Naive thymus-derived CD4-positive, alpha-beta T cell (primary cell): ENCODE measurements at regions of chr4 and their contacts with region 1.

Region 1: DNA sequence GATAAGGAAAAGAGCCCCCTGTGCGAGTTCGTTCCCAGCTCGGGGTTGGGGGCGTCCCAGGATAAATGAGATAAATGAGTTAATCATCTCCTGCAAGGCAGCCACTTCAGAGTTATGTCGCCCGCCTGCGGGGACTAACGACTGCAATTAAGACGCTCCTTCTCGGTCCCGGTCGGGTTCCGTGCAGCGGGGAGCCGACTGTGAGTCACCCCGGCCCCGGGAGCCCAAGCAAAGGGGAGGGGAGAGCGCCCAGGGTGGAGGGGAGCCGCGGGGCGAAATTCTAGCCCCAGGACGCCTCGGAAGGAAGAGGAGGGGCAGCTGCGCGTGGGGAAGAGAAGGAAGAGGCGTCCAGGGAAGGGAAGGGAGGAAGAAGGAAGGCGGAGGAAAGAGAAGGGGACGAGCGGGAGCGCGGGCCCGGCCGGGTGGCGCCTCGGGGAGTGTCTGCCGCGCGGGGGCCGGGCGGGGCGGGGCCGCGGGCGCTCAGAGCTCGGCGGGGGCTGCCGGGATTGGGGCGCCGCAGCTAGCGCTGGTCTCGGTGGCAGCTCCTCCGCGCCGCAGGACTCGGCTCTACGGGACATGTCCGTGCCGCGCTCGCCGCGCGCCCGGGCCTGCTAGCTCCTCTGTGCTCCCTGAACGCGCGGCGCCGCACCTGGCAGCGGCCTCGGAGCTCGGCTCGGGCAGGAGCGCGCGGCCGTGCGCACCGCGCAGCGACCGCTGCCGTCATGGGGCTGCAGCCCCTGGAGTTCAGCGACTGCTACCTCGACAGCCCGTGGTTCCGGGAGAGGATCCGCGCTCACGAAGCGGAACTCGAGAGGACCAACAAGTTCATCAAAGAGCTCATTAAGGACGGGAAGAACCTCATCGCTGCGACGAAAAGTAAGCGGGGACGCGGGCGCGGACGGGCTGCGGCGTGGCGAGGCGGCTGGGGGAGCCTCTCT is at the start of gene ARHGAP10:
- DNase-seq: peak; percentile 34 to 74 (median 54)
- ATAC-seq: peak; percentile 79
- H3K4me3 ChIP-seq: peak within 1 kb of the TSS; percentile 76
- H3K4me3 Mint-ChIP-seq: peak within 1 kb of the TSS; percentile 89 to 97 (median 92)
- H3K27ac ChIP-seq: peak within 1 kb of the TSS; percentile 63
- H3K27ac Mint-ChIP-seq: peak within 1 kb of the TSS; percentile 75 to 93 (median 88)
- H3K4me1 ChIP-seq: peaks cover 14 to 15% of the 10 kb centered on the region in 2 donors
- H3K4me1 Mint-ChIP-seq: peaks cover 13 to 42% (median 24%) of the 10 kb centered on the region in 7 donors
- H3K27me3 ChIP-seq: no peaks in the 10 kb centered on the region
- H3K27me3 Mint-ChIP-seq: peaks cover 0 to 41% (median 0%) of the 10 kb centered on the region in 5 donors
- total RNA-seq, gene ARHGAP10: 2.9 to 8.5 (median 3.2) TPM

Region 2: GRCh38 chr4:147683717-147684700 is 47.8 kb before region 1 on chr4 and contains the start of gene PRMT9:
- CTCF ChIA-PET with region 1: no interaction called
- POLR2A ChIA-PET with region 1: interaction called, 10 read pairs
- intact Hi-C with region 1: loop called (anchors 1 kb)
- DNase-seq: peak; percentile 79 to 90 (median 85)
- ATAC-seq: peak; percentile 98
- H3K4me3 ChIP-seq: peak within 1 kb of the TSS; percentile 97
- H3K4me3 Mint-ChIP-seq: peak within 1 kb of the TSS; percentile 89 to 100 (median 97)
- H3K27ac ChIP-seq: peak within 1 kb of the TSS; percentile 95
- H3K27ac Mint-ChIP-seq: peak within 1 kb of the TSS; percentile 86 to 99 (median 97)
- H3K4me1 ChIP-seq: peaks cover 4 to 16% of the 10 kb centered on the region in 2 donors
- H3K4me1 Mint-ChIP-seq: peaks cover 15 to 47% (median 38%) of the 10 kb centered on the region in 7 donors
- H3K27me3 ChIP-seq: no peaks in the 10 kb centered on the region
- H3K27me3 Mint-ChIP-seq: peaks cover 0 to 11% (median 2%) of the 10 kb centered on the region in 5 donors
- total RNA-seq, gene PRMT9: 9.7 to 15.9 (median 10.8) TPM

Region 3: DNA sequence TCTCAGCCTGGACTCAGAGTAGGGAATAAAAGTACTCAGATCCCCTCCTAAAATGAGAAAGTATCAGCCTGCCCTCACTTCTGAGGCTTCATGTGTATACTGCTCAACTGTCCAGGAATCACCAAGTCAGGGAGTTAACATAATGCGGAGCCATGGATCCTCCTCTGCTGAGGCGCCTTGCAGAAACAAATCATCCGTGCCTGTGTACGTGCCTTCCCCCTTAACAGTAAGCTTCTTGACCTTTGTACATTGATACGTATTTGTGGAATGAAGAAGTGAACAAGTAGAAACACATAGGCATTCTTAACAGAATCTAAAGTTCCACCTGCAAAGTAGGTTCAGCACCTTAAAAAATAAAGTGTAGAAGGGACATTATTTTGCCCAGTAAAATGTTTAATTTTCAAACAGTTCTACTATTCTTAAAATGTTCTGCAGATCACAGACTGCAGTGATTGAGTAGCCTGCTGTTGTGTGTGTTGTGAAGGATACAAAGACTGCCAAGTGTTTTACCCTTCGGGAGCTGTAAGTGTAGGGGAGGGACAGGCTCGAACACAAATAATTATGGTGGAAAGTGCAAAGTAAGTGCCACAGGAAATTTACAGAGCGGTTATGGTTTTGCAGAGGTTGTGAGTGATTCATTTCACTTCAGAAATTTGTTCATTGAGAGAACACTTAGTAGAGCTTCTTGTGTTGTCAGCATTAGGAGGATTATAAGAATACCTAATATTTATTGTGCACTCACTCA is 61.9 kb after region 1 on chr4:
- CTCF ChIA-PET with region 1: no interaction called
- POLR2A ChIA-PET with region 1: interaction called, 3 read pairs
- intact Hi-C with region 1: loop called in 1 of 2 experiments (anchors 2 kb)
- DNase-seq: no peak
- ATAC-seq: peak; percentile 16
- H3K4me3 ChIP-seq: no peak overlapping the region
- H3K4me3 Mint-ChIP-seq: peak overlapping the region in 5 of 10 donors; percentile 1 to 88 (median 30)
- H3K27ac ChIP-seq: no peak overlapping the region
- H3K27ac Mint-ChIP-seq: peak overlapping the region in 5 of 9 donors; percentile 18 to 89 (median 42)
- H3K4me1 ChIP-seq: peaks cover 0 to 11% of the 10 kb centered on the region in 2 donors
- H3K4me1 Mint-ChIP-seq: peaks cover 9 to 50% (median 25%) of the 10 kb centered on the region in 7 donors
- H3K27me3 ChIP-seq: no peaks in the 10 kb centered on the region
- H3K27me3 Mint-ChIP-seq: no peaks in the 10 kb centered on the region

Region 4: GRCh38 chr4:147799986-147800555 is 68.2 kb after region 1 on chr4:
- CTCF ChIA-PET with region 1: no interaction called
- POLR2A ChIA-PET with region 1: no interaction called
- intact Hi-C with region 1: loop called in 1 of 2 experiments (anchors 1 kb)
- DNase-seq: peak in 8 of 9 donors; percentile 5 to 64 (median 24)
- ATAC-seq: peak; percentile 95
- H3K4me3 ChIP-seq: no peak overlapping the region
- H3K4me3 Mint-ChIP-seq: peak overlapping the region in 2 of 10 donors; percentile 40 to 81
- H3K27ac ChIP-seq: no peak overlapping the region
- H3K27ac Mint-ChIP-seq: peak overlapping the region in 5 of 9 donors; percentile 22 to 79 (median 45)
- H3K4me1 ChIP-seq: peaks cover 7 to 15% of the 10 kb centered on the region in 2 donors
- H3K4me1 Mint-ChIP-seq: peaks cover 9 to 53% (median 12%) of the 10 kb centered on the region in 7 donors
- H3K27me3 ChIP-seq: no peaks in the 10 kb centered on the region
- H3K27me3 Mint-ChIP-seq: peaks cover 3 to 27% (median 7%) of the 10 kb centered on the region in 5 donors